AG04449 (cell line): ENCODE measurements at regions of chr9 and their contacts with region 1.

Region 1: DNA sequence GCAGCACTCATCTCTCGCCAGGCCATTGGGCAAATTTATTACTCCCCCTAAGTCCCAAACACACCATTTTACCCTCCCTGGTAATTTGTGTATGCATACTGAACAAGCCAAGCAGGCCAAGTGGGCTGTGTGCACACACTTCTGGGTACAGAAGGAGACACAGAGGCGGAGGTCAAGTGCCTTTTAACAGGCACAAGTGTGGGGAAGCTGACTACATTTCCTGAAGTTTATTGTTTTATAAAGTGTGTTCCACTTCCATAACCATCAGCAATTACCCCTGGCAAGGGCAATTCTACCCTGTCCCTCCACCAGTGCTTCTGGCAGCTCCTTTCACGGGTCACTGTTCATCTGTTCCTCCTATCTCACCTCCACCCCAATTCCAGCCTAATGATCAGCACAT is 93.9 kb downstream of the SETX start:
- DNase-seq: no peak
- H3K4me3 ChIP-seq: no peak overlapping the region
- CTCF ChIP-seq: no peak

Region 2: DNA sequence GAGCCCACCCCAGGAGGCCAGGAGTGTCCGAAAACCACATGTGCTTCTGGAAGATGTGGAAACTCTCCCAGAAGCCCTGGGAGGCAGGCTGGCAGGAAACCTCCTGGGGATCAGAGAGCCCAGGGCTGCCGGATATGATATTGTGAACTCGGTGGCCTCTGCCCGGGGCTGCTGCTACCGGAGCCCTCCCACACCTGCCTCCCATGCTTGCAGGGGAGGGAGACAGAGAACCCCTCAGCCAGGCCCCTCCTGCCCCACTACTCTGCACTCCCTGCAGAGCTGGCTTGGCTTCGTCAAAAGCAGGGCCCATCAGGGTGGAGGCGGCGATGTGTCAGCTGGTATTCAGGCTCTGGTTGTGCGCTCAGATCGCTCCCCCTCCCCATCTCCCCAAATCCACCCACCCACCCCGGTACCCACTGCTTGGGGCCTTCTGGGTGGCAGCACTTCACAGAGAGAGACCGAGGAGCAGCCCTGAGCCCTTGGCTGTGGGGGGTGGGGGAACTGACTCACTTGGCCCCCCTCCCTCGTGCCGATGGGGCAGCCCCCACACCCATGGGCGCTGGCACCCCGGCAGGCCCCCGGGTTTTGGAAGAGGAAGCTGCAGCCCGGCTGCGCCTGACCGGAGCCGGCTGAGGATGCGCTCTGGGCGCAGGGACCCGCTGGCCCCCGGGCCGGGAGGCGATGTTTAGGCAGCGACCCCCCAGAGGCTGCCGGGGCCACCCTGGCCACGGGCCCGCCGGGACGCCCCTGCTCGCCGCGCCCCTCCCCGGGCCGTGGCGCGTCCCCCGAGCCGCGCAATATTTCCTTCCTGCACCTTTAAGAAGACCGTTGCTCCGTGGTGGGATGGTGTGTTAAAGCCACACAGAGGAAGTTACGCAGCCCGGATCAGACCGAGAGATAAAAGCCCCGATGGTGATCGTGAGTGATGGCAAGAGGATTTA is 99.8 kb before region 1 on chr9:
- CTCF ChIA-PET with region 1: no interaction called
- POLR2A ChIA-PET with region 1: no interaction called
- DNase-seq: peak; percentile 23
- H3K4me3 ChIP-seq: peak overlapping the region; percentile 67
- CTCF ChIP-seq: no peak

Region 3: DNA sequence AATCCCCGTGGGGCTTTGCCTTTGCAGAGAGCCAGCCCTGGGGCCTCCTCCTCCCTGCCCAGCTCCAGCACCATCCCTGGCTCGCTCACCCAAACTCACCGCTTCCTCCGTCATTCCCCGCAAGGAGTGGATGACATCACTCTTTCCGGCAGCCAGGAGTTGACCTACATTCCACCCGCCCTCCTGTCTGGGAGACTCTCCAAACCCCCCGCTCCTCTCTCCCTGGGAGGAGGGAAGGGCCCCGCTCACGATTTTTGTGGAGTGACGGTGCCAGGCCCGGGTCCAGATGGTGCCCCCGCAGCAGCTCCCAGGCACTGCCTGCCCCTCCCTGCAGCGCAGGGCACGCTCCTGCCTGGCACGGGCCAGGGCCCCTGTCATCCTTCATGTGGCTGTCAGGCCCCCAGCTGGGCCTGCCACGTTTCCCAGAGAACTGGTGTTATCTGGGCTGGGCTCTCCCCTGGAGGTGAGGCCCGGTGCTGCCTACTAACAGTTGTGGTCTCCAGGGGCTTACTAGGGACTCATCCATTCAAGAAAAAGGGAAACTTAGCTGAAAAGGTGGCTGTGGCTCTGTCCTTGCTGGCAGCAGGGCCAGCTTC is 46.7 kb before region 1 on chr9:
- CTCF ChIA-PET with region 1: no interaction called
- POLR2A ChIA-PET with region 1: no interaction called
- DNase-seq: peak; percentile 71
- H3K4me3 ChIP-seq: no peak overlapping the region
- CTCF ChIP-seq: no peak

Region 4: DNA sequence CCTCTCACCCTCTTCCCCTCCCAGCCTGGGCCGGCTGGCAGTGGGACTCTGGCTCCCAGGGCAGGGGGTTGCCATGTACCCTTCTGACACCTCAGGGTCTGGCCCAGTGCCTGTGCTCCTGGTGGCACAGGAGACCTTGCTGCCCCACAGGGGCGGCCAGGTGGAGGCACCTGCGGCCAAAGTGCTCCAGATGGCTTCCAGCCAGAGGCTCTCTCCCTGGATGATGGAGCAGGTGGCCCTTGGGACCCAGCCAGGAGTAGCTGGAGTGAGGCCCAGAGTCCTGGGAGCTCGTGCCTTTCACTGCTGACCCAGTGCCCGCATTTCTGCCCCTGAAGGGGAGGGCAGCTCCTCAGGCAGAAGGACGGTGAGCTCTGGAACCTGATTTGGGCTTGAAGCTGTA is 11.7 kb before region 1 on chr9:
- CTCF ChIA-PET with region 1: interaction called, 126 read pairs
- POLR2A ChIA-PET with region 1: no interaction called
- DNase-seq: no peak
- H3K4me3 ChIP-seq: no peak overlapping the region
- CTCF ChIP-seq: no peak

Region 5: DNA sequence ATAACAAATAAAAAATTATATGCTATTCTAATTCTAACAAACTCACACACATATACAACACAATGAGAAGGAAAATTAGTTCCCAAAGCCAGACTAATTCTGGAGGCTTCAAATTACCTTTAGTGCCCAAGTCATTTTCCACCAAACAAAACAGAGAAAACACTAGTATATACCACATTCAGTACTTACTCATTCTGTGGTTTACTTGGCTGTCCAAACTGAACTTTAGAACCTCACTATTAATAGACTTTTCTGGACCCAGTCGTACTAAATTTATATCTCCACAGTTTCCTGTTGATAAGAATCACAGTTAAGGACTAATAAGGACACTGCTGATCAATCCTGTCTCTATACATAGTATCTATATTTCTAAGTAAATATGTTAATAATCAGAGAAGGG is 27.5 kb after region 1 on chr9:
- CTCF ChIA-PET with region 1: interaction called, 11 read pairs
- POLR2A ChIA-PET with region 1: no interaction called
- DNase-seq: peak; percentile 47
- H3K4me3 ChIP-seq: no peak overlapping the region
- CTCF ChIP-seq: no peak